ENCODE measurements at regions of chr6 and their contacts with region 1.

Region 1: DNA sequence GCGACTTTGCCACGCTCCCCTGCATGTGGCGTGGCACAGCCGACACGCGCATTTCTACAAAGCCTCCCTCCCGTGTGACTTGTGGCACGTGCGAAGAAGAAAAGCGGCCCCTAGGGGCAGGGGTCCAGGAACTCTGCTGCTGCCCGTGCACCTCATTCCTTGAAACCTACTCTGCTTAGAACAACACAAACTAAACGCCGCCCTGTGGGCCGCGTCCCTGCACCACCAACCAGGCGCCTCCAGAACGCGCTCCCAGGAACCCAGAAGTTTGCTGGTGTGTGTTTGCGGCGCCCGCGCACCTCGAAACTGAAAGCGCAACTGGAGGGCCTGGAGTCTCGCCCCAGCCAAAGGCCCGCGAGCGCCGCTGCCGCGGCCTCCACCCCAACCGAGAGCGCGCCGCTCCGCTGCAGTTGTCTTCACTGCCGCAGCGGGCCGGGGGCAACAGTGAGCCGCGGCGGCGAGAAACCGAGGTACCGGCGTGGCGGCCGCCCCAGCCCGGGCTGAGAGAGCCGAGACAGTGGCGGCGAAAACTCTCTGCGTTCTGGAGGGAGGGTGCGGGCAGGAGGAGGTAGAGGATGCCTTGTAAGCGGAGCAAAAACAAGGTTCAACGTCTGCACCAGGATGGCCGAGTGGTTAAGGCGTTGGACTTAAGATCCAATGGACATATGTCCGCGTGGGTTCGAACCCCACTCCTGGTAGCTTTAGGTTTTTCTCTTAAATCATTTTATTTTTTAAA is 65.8 kb downstream of the STX11 start:
- DNase-seq: peak; percentile 95
- ATAC-seq: peak; percentile 90
- H3K4me3 Mint-ChIP-seq: peak overlapping the region; percentile 81
- H3K27ac Mint-ChIP-seq: peak overlapping the region; percentile 99
- H3K4me1 Mint-ChIP-seq: peaks cover 41% of the 10 kb centered on the region
- H3K27me3 Mint-ChIP-seq: peaks cover 2% of the 10 kb centered on the region

Region 2: DNA sequence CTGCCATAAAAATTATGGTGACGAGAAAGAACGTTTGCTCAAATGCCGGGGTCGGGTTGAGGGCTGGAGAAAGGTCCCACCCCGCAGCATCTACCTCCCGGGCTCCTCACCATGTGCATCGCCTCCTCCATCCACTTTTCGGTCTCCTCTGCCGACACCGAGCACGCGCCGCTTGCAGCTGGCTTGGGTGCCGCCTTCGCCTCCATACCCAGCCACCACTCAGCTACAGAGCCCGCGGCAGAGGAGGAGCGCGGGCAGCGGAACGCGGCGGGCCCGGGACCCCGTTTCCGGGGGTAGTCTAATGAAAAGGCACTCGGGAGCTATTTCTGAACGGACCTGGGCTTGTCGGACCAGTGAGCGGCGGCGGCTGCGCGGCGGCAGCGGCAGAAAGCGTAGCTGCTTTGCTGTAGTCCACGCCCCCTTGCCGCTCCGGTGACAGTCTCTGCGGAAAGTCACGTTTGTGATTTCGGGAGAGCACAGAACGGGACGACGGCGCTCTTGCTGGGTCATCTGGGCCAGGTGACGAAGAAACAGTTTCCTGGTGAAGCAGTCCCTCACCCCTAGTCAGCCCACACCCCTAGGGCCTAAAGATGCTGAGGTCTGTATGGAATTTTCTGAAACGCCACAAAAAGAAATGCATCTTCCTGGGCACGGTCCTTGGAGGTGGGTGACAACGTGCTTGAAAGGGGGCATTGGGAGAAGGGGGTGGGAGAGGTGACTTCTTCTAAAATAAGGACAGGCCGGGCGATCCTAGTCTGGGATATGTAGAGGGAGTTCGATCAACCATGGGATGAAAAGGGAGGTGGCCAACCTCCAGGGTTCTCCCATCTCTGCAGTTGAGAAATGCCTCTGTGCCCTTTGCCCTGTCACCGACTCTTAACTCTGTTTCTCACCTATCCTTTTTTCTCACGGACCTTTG is 765.4 kb before region 1 on chr6 and contains the starts of genes ADAT2 and PEX3:
- CTCF ChIA-PET with region 1: no interaction called
- POLR2A ChIA-PET with region 1: no interaction called
- intact Hi-C with region 1: loop called in 1 of 2 experiments (anchors 1 kb)
- DNase-seq: peak; percentile 97
- ATAC-seq: peak; percentile 95
- H3K4me3 Mint-ChIP-seq: peak within 1 kb of the TSS; percentile 88
- H3K27ac Mint-ChIP-seq: peak within 1 kb of the TSS; percentile 95
- H3K4me1 Mint-ChIP-seq: peaks cover 52% of the 10 kb centered on the region
- H3K27me3 Mint-ChIP-seq: no peaks in the 10 kb centered on the region
- total RNA-seq, gene ADAT2: 23.6 to 26.0 TPM
- total RNA-seq, gene PEX3: 31.1 to 42.2 TPM

Region 3: DNA sequence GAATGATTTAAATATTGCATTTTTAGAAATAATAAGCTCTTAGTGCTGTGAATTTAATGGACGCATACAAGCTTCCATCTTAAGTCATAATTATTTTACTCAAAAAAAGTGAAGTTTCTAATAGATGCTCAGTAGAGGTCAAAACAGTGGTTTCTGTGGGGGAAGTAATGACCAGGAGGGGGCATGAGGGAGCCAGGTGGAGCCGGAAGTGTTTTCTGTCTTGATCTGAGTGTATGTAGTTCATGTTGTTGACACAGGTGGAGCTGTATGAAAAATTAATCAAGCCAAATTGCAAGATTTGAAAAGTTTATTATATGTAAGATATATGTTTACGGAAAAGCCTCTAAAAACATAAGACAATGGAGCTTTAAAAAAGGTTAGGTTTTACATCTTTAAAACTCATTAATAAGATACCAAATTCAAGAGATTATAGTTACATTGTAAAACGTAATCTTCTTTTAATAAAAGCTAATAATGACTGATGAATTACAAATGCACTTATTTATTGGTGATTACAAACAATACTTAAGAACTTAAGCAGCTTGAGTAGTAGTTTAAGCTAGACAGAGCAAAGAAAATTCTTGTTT is 276.0 kb before region 1 on chr6:
- CTCF ChIA-PET with region 1: interaction called, 13 read pairs
- POLR2A ChIA-PET with region 1: no interaction called
- intact Hi-C with region 1: loop called (anchors 1 to 5 kb)
- DNase-seq: peak; percentile 75
- ATAC-seq: peak; percentile 93
- H3K4me3 Mint-ChIP-seq: no peak overlapping the region
- H3K27ac Mint-ChIP-seq: no peak overlapping the region
- H3K4me1 Mint-ChIP-seq: peaks cover 3% of the 10 kb centered on the region
- H3K27me3 Mint-ChIP-seq: no peaks in the 10 kb centered on the region

Region 4: GRCh38 chr6:144104898-144105487 is 111.1 kb before region 1 on chr6:
- CTCF ChIA-PET with region 1: interaction called, 37 read pairs
- POLR2A ChIA-PET with region 1: no interaction called
- intact Hi-C with region 1: loop called (anchors 1 kb)
- DNase-seq: peak; percentile 30
- ATAC-seq: peak; percentile 78
- H3K4me3 Mint-ChIP-seq: no peak overlapping the region
- H3K27ac Mint-ChIP-seq: no peak overlapping the region
- H3K4me1 Mint-ChIP-seq: peaks cover 8% of the 10 kb centered on the region
- H3K27me3 Mint-ChIP-seq: no peaks in the 10 kb centered on the region

Region 5: DNA sequence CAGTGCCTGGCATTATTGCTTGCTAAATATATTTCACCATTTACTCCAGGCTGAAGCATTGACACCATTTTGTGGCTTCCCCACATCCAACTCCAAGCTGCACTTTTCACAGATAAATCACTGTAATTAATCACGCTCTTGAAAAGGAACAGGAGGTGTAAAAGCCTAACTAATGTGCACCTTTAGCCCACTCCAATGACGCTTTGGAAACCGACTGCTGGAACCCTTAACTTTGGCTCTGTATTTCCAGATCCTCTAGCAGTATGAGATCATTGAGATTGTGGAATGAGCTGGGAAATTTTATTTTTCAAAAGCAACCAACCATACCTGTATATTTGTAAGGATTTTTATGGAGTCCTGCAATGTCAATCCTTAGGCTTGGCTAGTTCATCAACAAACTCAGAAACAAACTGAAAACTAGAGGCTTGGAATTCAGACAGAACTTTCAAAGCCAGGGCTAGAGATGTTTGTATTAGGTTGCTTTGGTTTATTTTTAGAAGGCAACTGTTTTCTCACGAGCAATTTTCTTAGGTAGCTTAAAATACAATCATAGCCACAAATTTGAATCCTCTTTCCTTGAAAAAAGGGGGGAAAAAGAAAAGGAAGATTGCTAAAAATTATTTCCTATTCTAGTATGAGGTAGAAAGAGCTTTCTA is 16.2 kb after region 1 on chr6:
- CTCF ChIA-PET with region 1: interaction called, 12 read pairs
- POLR2A ChIA-PET with region 1: no interaction called
- intact Hi-C with region 1: no loop called
- DNase-seq: no peak
- ATAC-seq: no peak
- H3K4me3 Mint-ChIP-seq: no peak overlapping the region
- H3K27ac Mint-ChIP-seq: no peak overlapping the region
- H3K4me1 Mint-ChIP-seq: no peaks in the 10 kb centered on the region
- H3K27me3 Mint-ChIP-seq: no peaks in the 10 kb centered on the region

Region 6: GRCh38 chr6:144343701-144344428 is 127.8 kb after region 1 on chr6:
- CTCF ChIA-PET with region 1: no interaction called
- POLR2A ChIA-PET with region 1: no interaction called
- intact Hi-C with region 1: loop called (anchors 1 to 5 kb)
- DNase-seq: peak; percentile 60
- ATAC-seq: peak; percentile 54
- H3K4me3 Mint-ChIP-seq: peak overlapping the region; percentile 82
- H3K27ac Mint-ChIP-seq: peak overlapping the region; percentile 98
- H3K4me1 Mint-ChIP-seq: peaks cover 72% of the 10 kb centered on the region
- H3K27me3 Mint-ChIP-seq: no peaks in the 10 kb centered on the region

Region 7: DNA sequence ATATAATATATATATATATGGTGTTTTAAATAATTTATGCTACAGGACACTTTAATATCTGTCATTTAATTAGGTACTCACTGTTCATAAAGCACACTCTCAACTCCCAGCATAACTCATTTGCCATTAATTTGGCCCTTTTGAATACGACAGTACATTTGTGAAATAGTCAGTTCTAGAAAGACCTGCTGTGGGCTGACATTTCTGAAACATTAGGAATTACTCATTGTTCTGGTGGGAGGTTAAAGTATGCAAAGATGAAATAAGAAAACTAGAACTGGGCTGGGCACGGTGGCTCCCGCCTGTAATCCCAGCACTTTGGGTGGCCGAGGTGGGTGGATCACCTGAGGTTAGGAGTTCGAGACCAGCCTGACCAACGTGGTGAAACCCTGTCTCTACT is 566.5 kb after region 1 on chr6:
- CTCF ChIA-PET with region 1: no interaction called
- POLR2A ChIA-PET with region 1: no interaction called
- intact Hi-C with region 1: no loop called
- DNase-seq: peak; percentile 28
- ATAC-seq: peak; percentile 70
- H3K4me3 Mint-ChIP-seq: no peak overlapping the region
- H3K27ac Mint-ChIP-seq: no peak overlapping the region
- H3K4me1 Mint-ChIP-seq: peaks cover 2% of the 10 kb centered on the region
- H3K27me3 Mint-ChIP-seq: no peaks in the 10 kb centered on the region

Region 8: GRCh38 chr6:145963216-145964068 is 1747.3 kb after region 1 on chr6:
- CTCF ChIA-PET with region 1: no interaction called
- POLR2A ChIA-PET with region 1: no interaction called
- intact Hi-C with region 1: loop called in 1 of 2 experiments (anchors 10 kb)
- DNase-seq: peak; percentile 67
- ATAC-seq: peak; percentile 34
- H3K4me3 Mint-ChIP-seq: peak overlapping the region; percentile 94
- H3K27ac Mint-ChIP-seq: peak overlapping the region; percentile 88
- H3K4me1 Mint-ChIP-seq: peaks cover 44% of the 10 kb centered on the region
- H3K27me3 Mint-ChIP-seq: no peaks in the 10 kb centered on the region